Aorta (tissue), 5 donors: ENCODE measurements at regions of chr13 and their contacts with region 1.

Region 1: GRCh38 chr13:27533155-27533643 is 82.8 kb upstream of the MTIF3 start:
- DNase-seq: peak; percentile 90 to 96
- ATAC-seq: peak; percentile 89
- H3K4me3 ChIP-seq: no peak overlapping the region
- H3K27ac ChIP-seq: no peak overlapping the region
- H3K4me1 ChIP-seq: no peaks in the 10 kb centered on the region
- H3K27me3 ChIP-seq: no peaks in the 10 kb centered on the region

Region 2: GRCh38 chr13:27281420-27281819 is 251.8 kb before region 1 on chr13:
- intact Hi-C with region 1: no loop called
- DNase-seq: no peak
- ATAC-seq: no peak
- H3K4me3 ChIP-seq: no peak overlapping the region
- H3K27ac ChIP-seq: no peak overlapping the region
- H3K4me1 ChIP-seq: no peaks in the 10 kb centered on the region
- H3K27me3 ChIP-seq: no peaks in the 10 kb centered on the region

Region 3: GRCh38 chr13:27712421-27712820 is 179.2 kb after region 1 on chr13:
- intact Hi-C with region 1: loop called in 1 of 2 experiments (anchors 10 kb)
- DNase-seq: no peak
- ATAC-seq: no peak
- H3K4me3 ChIP-seq: no peak overlapping the region
- H3K27ac ChIP-seq: no peak overlapping the region
- H3K4me1 ChIP-seq: no peaks in the 10 kb centered on the region
- H3K27me3 ChIP-seq: no peaks in the 10 kb centered on the region

Region 4: DNA sequence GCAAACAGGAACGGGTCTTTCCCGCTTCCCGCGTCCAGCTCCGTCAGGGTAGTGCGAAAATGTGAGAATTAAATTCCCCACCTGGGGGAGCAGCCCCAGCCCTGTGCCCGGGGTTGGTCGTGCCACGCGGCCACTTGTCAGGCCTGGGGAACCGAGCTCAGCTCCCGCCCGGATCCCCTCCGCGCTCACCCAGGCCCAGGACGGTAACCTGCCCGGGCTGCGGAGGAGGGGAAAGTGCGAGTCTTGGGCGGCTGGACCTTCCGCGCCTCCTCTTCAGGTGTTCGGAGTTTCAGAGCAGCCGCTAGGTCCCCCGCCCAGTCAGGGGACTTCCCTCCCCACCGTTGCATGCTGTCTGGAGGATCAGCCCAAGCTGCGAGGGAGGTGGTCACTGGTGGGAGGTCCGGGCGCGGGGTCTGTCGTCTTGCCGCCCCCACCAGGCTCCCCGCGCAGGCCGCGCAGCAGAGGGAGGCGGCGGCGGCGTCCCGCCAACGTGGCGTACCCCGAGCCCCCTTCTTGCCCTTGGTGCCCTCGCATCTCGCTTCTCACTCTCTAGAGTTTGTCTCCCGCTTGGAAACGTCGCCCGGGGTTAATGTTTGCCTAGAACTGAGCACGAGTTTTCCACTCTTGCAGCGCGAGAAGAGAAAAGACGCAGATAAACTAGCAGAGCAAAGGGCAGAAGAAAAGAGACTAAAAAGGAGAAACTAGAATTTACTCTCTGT is 447.2 kb after region 1 on chr13:
- intact Hi-C with region 1: loop called (anchors 10 kb)
- DNase-seq: no peak
- ATAC-seq: no peak
- H3K4me3 ChIP-seq: no peak overlapping the region
- H3K27ac ChIP-seq: no peak overlapping the region
- H3K4me1 ChIP-seq: no peaks in the 10 kb centered on the region
- H3K27me3 ChIP-seq: no peaks in the 10 kb centered on the region